GM12878 (cell line): ENCODE measurements at regions of chr12 and their contacts with region 1.

Region 1: GRCh38 chr12:16789204-16789790 is 183.3 kb upstream of the LMO3 start:
- DNase-seq: peak; percentile 37
- ATAC-seq: peak; percentile 84
- H3K4me3 ChIP-seq: no peak overlapping the region
- H3K27ac ChIP-seq: no peak overlapping the region
- H3K4me1 ChIP-seq: no peaks in the 10 kb centered on the region
- H3K27me3 ChIP-seq: no peaks in the 10 kb centered on the region
- CTCF ChIP-seq: no peak
- EP300 ChIP-seq: peak; percentile 37 to 58; a peak in 2 of 4 replicates
- POLR2A ChIP-seq: no peak
- RAD21 ChIP-seq: no peak

Region 2: GRCh38 chr12:16756833-16757555 is 32.3 kb before region 1 on chr12:
- CTCF ChIA-PET with region 1: interaction called, 3 read pairs
- POLR2A ChIA-PET with region 1: interaction called, 8 read pairs
- RAD21 ChIA-PET with region 1: interaction called, 7 read pairs
- SMC1A ChIA-PET with region 1: interaction called, 18 read pairs
- in situ Hi-C with region 1: no loop called
- intact Hi-C with region 1: no loop called
- DNase-seq: peak; percentile 3
- ATAC-seq: peak; percentile 70
- H3K4me3 ChIP-seq: no peak overlapping the region
- H3K27ac ChIP-seq: no peak overlapping the region
- H3K4me1 ChIP-seq: no peaks in the 10 kb centered on the region
- H3K27me3 ChIP-seq: no peaks in the 10 kb centered on the region
- CTCF ChIP-seq: no peak
- EP300 ChIP-seq: no peak
- POLR2A ChIP-seq: no peak
- RAD21 ChIP-seq: no peak

Region 3: DNA sequence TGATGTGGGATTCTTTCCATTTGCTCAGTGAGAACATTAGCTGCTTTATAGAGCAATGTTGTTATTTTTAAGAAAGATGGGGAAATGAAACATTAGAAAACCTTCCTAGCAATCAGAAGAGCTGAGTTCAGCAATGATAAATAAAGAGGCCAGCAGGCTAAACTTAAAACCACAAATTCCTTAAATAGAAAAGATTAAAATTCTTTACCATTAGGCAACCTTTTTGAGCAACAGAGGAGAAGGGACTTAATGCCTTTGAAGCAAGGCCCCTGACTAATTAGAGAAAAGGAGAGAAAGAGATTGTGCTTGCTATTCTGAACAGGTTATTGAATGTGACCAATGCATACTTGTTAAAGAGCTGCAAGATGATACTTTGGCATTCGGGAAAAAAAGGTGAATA is 22.6 kb before region 1 on chr12:
- CTCF ChIA-PET with region 1: interaction called, 4 read pairs
- POLR2A ChIA-PET with region 1: interaction called, 8 read pairs
- RAD21 ChIA-PET with region 1: interaction called, 6 read pairs
- SMC1A ChIA-PET with region 1: interaction called, 18 read pairs
- in situ Hi-C with region 1: no loop called
- intact Hi-C with region 1: no loop called
- DNase-seq: no peak
- ATAC-seq: no peak
- H3K4me3 ChIP-seq: no peak overlapping the region
- H3K27ac ChIP-seq: no peak overlapping the region
- H3K4me1 ChIP-seq: no peaks in the 10 kb centered on the region
- H3K27me3 ChIP-seq: no peaks in the 10 kb centered on the region
- CTCF ChIP-seq: no peak
- EP300 ChIP-seq: no peak
- POLR2A ChIP-seq: no peak
- RAD21 ChIP-seq: no peak

Region 4: DNA sequence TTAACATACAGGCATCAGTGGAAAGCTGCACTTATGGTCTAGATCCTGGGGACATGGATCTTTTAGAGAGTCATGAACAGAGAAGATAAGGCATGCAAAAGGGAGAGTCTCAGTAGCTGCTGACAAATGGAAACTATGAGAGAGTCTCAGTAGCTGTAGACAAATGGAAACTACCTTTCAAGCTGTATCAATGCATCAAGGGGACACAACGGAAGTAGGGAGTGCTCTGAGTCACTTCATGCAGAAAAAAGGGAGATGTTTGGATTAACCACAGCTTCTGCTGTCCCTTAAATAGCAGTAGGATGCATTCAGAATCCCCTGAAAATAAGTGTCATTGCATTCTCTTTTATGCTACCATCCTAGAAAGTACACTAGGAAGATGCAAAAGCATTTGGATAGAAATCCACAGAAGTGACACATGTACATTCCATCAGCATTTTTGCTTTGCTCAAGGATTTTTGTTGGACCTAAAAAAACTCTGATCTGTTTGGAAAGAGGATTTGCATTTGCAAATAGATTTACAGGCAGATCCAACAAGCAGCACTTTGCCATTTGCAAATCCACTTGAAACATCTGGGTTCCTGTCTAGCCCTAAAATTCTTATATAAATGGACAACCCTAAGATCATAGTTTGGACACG is 44.2 kb after region 1 on chr12:
- CTCF ChIA-PET with region 1: interaction called, 4 read pairs
- POLR2A ChIA-PET with region 1: interaction called, 5 read pairs
- RAD21 ChIA-PET with region 1: interaction called, 12 read pairs
- SMC1A ChIA-PET with region 1: interaction called, 12 read pairs
- in situ Hi-C with region 1: no loop called
- intact Hi-C with region 1: no loop called
- DNase-seq: peak; percentile 33
- ATAC-seq: peak; percentile 82
- H3K4me3 ChIP-seq: no peak overlapping the region
- H3K27ac ChIP-seq: no peak overlapping the region
- H3K4me1 ChIP-seq: no peaks in the 10 kb centered on the region
- H3K27me3 ChIP-seq: no peaks in the 10 kb centered on the region
- CTCF ChIP-seq: no peak
- EP300 ChIP-seq: peak; percentile 18 to 48; a peak in 2 of 4 replicates
- POLR2A ChIP-seq: no peak
- RAD21 ChIP-seq: no peak

Region 5: DNA sequence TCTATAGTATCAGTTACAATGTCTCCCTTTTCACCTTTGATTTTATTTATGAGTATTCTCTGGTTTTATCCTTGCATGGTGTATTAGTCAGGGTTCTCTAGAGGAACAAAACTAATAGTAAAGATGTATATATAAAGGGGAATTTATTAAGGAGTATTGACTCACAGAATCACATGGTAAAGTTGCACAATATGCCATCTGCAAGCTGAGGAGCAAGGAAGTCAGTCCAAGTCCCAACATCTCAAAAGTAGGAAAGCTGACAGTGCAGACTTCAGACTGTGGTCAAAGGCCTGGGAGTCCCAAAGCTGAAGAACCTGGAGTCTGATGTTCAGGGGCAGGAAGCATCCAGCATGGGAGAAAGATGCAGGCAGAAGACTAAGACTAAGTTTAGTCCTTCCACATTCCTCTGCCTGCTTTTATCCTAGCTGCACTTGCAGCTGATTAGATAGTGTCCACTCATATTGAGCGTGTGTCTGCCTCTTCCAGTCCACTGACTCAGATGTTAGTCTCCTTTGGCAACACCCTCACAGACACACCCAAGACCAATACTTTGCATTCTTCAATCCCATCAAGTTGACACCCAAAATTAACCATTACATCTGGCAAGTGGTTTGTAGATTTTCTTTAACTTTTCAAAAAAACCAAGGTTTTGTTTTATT is 124.7 kb after region 1 on chr12:
- CTCF ChIA-PET with region 1: no interaction called
- POLR2A ChIA-PET with region 1: no interaction called
- RAD21 ChIA-PET with region 1: no interaction called
- SMC1A ChIA-PET with region 1: no interaction called
- in situ Hi-C with region 1: no loop called
- intact Hi-C with region 1: no loop called
- DNase-seq: no peak
- ATAC-seq: no peak
- H3K4me3 ChIP-seq: no peak overlapping the region
- H3K27ac ChIP-seq: no peak overlapping the region
- H3K4me1 ChIP-seq: no peaks in the 10 kb centered on the region
- H3K27me3 ChIP-seq: no peaks in the 10 kb centered on the region
- CTCF ChIP-seq: no peak
- EP300 ChIP-seq: no peak
- POLR2A ChIP-seq: no peak
- RAD21 ChIP-seq: no peak